Posterior vena cava (tissue), 2 donors: ENCODE measurements at regions of chr6 and their contacts with region 1.

Region 1: DNA sequence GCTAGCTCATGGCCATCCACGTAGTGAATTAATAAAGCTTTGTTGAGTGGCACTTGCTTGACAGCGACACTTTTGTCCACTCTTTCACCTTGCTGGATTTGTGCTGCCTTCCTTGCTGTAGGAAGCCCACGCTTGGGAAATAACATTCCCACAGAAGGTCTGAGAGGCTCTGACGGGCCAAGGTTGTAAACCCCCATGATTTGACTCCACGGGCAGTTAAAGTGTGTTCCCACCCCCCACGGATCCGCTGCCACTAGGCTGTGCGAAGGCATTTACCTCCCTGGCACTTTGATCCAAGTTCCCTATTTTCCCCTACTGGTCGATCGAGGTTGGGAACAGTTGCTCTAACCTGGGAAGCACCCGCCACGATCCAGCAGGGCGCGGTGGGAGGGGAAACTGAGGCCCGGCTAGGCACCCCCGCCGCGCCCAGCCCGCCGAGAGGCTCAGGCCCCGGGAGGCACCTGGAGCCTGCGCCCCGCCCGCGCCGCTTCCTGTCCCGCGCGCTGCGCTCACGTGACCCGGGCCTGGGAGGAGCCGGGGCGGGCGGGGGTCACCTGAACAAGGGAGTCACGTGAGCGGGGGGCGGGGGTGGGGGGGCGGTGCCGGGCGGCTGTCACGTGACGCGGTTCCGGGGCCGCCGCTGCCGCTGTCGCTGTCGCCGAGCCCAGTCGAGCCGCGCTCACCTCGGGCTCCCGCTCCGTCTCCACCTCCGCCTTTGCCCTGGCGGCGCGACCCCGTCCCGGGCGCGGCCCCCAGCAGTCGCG is at the start of gene IGF2R:
- DNase-seq: peak; percentile 97
- total RNA-seq, gene IGF2R: 62.7 to 71.8 TPM

Region 2: GRCh38 chr6:159416891-159417560 is 551.6 kb before region 1 on chr6:
- intact Hi-C with region 1: loop called in 1 of 2 experiments (anchors 5 kb)
- DNase-seq: no peak

Region 3: GRCh38 chr6:159777240-159777904 is 191.2 kb before region 1 on chr6:
- intact Hi-C with region 1: no loop called
- DNase-seq: no peak

Region 4: DNA sequence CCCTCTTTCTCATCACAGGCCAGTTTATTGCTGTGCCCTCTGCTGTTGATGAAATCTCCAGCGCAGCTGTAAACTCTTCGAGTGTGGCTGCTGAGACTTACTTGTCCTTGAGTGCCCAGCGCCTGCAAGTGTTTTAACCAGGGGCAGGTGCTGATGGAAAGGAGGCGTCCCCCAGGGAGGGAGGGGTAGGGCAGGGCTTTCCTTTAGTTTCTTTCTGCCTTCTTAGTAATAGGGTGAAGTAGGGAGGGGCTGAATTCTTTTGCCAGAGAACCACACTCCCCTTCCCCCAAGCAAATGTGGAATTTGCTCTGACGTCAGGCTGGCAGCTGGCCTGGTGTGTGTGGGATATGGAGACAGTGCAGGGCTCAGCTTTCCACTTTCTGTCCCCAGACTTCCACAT is 61.5 kb after region 1 on chr6:
- intact Hi-C with region 1: no loop called
- DNase-seq: peak; percentile 94

Region 5: GRCh38 chr6:161639772-161640171 is 1671.2 kb after region 1 on chr6:
- intact Hi-C with region 1: no loop called
- DNase-seq: no peak